ENCODE measurements at regions of chr12 and their contacts with region 1.

Region 1: GRCh38 chr12:67268896-67269631 is at the start of gene CAND1:
- DNase-seq: peak; percentile 93 to 99 (median 98)
- ATAC-seq: peak; percentile 89
- H3K4me3 ChIP-seq: peak within 1 kb of the TSS; percentile 69
- H3K4me3 Mint-ChIP-seq: peak within 1 kb of the TSS; percentile 80 to 99 (median 95)
- H3K27ac ChIP-seq: peak within 1 kb of the TSS; percentile 91
- H3K27ac Mint-ChIP-seq: peak within 1 kb of the TSS; percentile 97 to 100 (median 99)
- H3K4me1 ChIP-seq: peaks cover 22 to 26% of the 10 kb centered on the region in 2 donors
- H3K4me1 Mint-ChIP-seq: peaks cover 22 to 55% (median 52%) of the 10 kb centered on the region in 7 donors
- H3K27me3 ChIP-seq: no peaks in the 10 kb centered on the region
- H3K27me3 Mint-ChIP-seq: no peaks in the 10 kb centered on the region
- total RNA-seq, gene CAND1: 83.2 to 160 (median 111) TPM

Region 2: GRCh38 chr12:66301944-66302826 is 966.9 kb before region 1 on chr12 and contains the start of gene HELB:
- CTCF ChIA-PET with region 1: no interaction called
- POLR2A ChIA-PET with region 1: interaction called, 3 read pairs
- intact Hi-C with region 1: loop called (anchors 1 to 2 kb)
- DNase-seq: peak; percentile 73 to 93 (median 84)
- ATAC-seq: peak; percentile 92
- H3K4me3 ChIP-seq: peak within 1 kb of the TSS; percentile 98
- H3K4me3 Mint-ChIP-seq: peak within 1 kb of the TSS; percentile 87 to 99 (median 97)
- H3K27ac ChIP-seq: peak within 1 kb of the TSS; percentile 91
- H3K27ac Mint-ChIP-seq: peak within 1 kb of the TSS; percentile 90 to 99 (median 98)
- H3K4me1 ChIP-seq: peaks cover 17 to 20% of the 10 kb centered on the region in 2 donors
- H3K4me1 Mint-ChIP-seq: peaks cover 25 to 63% (median 54%) of the 10 kb centered on the region in 7 donors
- H3K27me3 ChIP-seq: no peaks in the 10 kb centered on the region
- H3K27me3 Mint-ChIP-seq: peaks cover 0 to 5% (median 0%) of the 10 kb centered on the region in 5 donors
- total RNA-seq, gene HELB: 47.9 to 59.2 (median 54.0) TPM

Region 3: GRCh38 chr12:67161322-67161918 is 107.6 kb before region 1 on chr12:
- CTCF ChIA-PET with region 1: no interaction called
- POLR2A ChIA-PET with region 1: no interaction called
- intact Hi-C with region 1: loop called in 1 of 2 experiments (anchors 1 kb)
- DNase-seq: peak in 7 of 9 donors; percentile 8 to 27 (median 21)
- ATAC-seq: no peak
- H3K4me3 ChIP-seq: no peak overlapping the region
- H3K4me3 Mint-ChIP-seq: no peak overlapping the region
- H3K27ac ChIP-seq: no peak overlapping the region
- H3K27ac Mint-ChIP-seq: no peak overlapping the region
- H3K4me1 ChIP-seq: no peaks in the 10 kb centered on the region
- H3K4me1 Mint-ChIP-seq: peaks cover 0 to 3% (median 0%) of the 10 kb centered on the region in 7 donors
- H3K27me3 ChIP-seq: no peaks in the 10 kb centered on the region
- H3K27me3 Mint-ChIP-seq: peaks cover 0 to 6% (median 4%) of the 10 kb centered on the region in 5 donors

Region 4: DNA sequence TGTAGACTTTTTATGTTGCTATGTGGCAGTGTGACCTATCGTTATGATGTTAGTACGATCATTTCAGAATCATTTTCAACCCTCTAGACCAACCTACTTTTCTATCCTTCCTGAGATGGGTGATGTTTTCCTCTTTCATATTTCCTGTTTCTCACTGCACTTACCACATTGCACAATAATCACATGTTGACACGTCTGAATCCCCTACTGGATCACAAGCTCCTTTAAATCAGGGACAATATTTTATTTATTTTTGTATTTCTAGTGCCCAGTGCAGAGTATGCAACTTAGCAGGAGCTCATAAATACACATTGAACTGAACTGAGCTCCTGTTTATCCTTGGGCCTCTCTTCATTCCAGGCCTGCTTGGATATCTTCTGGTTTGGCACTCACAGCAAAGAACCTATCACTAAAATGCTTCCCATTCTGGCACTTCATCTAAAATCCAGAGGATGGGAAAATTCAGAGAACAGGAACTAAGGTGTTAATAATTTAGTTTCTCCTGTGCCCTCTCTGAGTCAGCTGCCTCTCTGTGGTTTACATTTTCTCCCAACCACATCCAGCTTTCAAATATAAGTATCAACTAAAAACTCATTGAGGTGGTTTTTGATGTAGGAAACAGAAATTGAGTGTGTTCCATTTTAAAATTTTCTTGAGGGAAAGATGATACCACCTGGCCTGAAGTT is 310.1 kb after region 1 on chr12:
- CTCF ChIA-PET with region 1: no interaction called
- POLR2A ChIA-PET with region 1: no interaction called
- intact Hi-C with region 1: loop called in 1 of 2 experiments (anchors 10 kb)
- DNase-seq: peak in 7 of 9 donors; percentile 52 to 80 (median 72)
- ATAC-seq: peak; percentile 80
- H3K4me3 ChIP-seq: peak overlapping the region; percentile 47
- H3K4me3 Mint-ChIP-seq: peak overlapping the region; percentile 56 to 87 (median 76)
- H3K27ac ChIP-seq: no peak overlapping the region
- H3K27ac Mint-ChIP-seq: peak overlapping the region; percentile 3 to 90 (median 61)
- H3K4me1 ChIP-seq: peaks cover 35 to 50% of the 10 kb centered on the region in 2 donors
- H3K4me1 Mint-ChIP-seq: peaks cover 32 to 69% (median 63%) of the 10 kb centered on the region in 7 donors
- H3K27me3 ChIP-seq: no peaks in the 10 kb centered on the region
- H3K27me3 Mint-ChIP-seq: peaks cover 0 to 33% (median 0%) of the 10 kb centered on the region in 5 donors

Region 5: DNA sequence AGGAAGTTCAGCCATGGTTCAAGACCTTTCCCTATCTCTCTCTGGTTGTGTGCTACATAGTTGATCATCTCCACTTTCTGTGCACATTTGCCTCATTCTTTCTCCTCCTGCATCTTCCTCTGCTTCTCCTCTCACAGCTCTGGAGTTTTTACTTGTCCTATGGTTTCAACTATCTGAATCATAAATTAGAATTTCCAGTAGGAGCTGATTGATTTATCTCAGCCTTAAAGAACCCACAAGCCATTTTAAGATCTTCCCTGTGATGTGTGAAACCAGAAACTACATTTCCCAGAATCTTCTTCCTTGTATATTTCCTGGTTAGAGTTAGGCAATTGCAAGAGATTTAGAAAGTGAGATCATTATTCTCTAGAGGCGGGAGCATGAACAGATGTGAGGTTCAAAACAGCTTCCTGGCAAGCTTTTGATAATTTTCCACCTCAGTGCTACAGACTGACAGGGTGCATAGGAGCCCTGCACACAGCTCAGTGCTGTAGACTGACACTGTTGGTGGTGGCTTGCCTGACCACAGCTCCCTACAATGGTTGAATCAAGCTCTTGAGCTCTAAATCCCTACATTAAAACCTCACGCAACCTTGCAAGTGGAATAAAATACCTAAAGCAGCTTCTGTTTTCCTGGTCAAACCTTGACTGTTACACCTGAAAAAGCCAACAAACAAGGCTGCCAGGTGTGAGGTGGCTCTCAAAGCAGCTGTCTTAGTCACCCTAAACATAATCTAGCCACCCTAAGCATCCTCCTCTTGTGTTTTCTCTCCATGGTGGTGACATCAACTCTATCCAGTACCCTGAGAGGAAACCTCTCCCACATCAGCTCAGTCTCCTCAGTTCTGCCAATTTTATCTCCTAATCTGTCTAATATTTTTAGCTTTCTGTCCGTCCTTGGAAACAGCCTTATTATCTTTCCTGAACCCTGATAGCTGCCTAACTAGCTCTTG is 912.0 kb after region 1 on chr12:
- CTCF ChIA-PET with region 1: no interaction called
- POLR2A ChIA-PET with region 1: interaction called, 4 read pairs
- intact Hi-C with region 1: loop called in 1 of 2 experiments (anchors 1 kb)
- DNase-seq: peak in 8 of 9 donors; percentile 43 to 77 (median 68)
- ATAC-seq: peak; percentile 92
- H3K4me3 ChIP-seq: peak overlapping the region; percentile 5
- H3K4me3 Mint-ChIP-seq: peak overlapping the region; percentile 3 to 69 (median 60)
- H3K27ac ChIP-seq: peak overlapping the region; percentile 64
- H3K27ac Mint-ChIP-seq: peak overlapping the region; percentile 75 to 94 (median 88)
- H3K4me1 ChIP-seq: peaks cover 33 to 53% of the 10 kb centered on the region in 2 donors
- H3K4me1 Mint-ChIP-seq: peaks cover 33 to 60% (median 55%) of the 10 kb centered on the region in 7 donors
- H3K27me3 ChIP-seq: no peaks in the 10 kb centered on the region
- H3K27me3 Mint-ChIP-seq: peaks cover 0 to 3% (median 0%) of the 10 kb centered on the region in 5 donors

Region 6: DNA sequence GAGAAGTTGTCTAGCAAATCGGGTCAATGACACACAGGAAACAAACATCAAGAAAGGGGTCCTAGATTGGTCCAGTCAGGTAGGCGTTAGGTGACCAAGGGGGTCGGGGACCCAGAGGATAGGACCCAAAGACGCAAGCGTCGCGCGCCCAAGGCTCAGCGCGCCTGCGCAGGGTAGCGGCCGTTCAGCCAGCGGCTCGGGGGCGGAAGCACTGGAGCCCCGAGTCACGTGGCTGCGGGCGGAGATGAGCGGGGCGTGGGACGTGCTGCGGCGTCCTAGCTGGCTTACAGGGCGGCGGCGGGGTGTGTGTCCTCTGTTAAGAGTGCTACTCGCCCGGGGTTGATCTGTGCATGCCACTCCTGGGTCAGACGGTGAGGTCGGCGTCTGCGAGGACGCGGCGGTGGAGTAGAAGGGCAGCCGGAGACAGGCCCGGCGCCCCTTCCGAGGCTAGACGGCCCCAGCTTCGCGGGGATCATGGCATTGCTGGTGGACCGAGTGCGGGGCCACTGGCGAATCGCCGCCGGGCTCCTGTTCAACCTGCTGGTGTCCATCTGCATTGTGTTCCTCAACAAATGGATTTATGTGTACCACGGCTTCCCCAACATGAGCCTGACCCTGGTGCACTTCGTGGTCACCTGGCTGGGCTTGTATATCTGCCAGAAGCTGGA is 1477.0 kb after region 1 on chr12 and contains the start of gene SLC35E3:
- CTCF ChIA-PET with region 1: no interaction called
- POLR2A ChIA-PET with region 1: no interaction called
- intact Hi-C with region 1: loop called in 1 of 2 experiments (anchors 5 kb)
- DNase-seq: peak; percentile 81 to 91 (median 86)
- ATAC-seq: peak; percentile 99
- H3K4me3 ChIP-seq: peak within 1 kb of the TSS; percentile 98
- H3K4me3 Mint-ChIP-seq: peak within 1 kb of the TSS; percentile 91 to 99 (median 96)
- H3K27ac ChIP-seq: peak within 1 kb of the TSS; percentile 79
- H3K27ac Mint-ChIP-seq: peak within 1 kb of the TSS; percentile 92 to 97 (median 96)
- H3K4me1 ChIP-seq: peaks cover 7 to 16% of the 10 kb centered on the region in 2 donors
- H3K4me1 Mint-ChIP-seq: peaks cover 27 to 64% (median 54%) of the 10 kb centered on the region in 7 donors
- H3K27me3 ChIP-seq: no peaks in the 10 kb centered on the region
- H3K27me3 Mint-ChIP-seq: no peaks in the 10 kb centered on the region
- total RNA-seq, gene SLC35E3: 9.0 to 12.1 (median 9.2) TPM

Measured in naive thymus-derived CD4-positive, alpha-beta T cell (primary cell).